ENCODE measurements at regions of chr20 and their contacts with region 1.

Region 1: GRCh38 chr20:52083627-52084232 is 107.8 kb downstream of the ZFP64 start:
- DNase-seq: no peak
- H3K4me3 ChIP-seq: no peak overlapping the region
- H3K27me3 ChIP-seq: no peaks in the 10 kb centered on the region
- CTCF ChIP-seq: peak; percentile 71

Region 2: DNA sequence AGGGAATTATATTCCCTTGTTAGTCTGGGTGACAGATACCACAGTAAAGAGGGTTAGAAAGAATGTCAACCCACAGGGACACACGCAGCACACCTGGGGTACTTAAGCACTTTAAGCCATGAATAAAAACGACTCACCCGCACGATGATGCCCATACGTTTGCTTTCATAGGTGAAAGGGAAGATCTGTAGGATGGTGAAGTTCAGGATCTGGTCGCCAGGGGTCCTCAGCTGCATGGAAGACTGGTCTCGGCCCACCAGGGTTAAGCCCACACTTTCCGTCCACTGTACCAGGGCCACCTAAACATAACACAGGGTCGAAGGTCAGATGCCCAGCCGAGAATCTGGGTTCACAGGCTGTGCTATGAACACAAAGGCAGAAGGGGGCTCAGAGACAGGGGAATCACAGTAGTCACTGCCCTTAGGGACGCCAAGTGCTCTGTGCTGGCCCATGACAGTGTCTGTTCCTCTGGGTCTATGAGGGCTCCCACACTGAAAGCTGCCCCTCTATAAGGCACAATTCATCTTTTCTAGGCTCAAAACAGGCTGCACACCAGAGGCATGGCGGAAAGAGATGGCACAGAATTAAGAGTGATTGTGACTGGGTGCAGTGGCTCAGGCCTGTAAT is 444.4 kb before region 1 on chr20:
- CTCF ChIA-PET with region 1: interaction called, 28 read pairs
- POLR2A ChIA-PET with region 1: no interaction called
- DNase-seq: no peak
- H3K4me3 ChIP-seq: no peak overlapping the region
- H3K27me3 ChIP-seq: no peaks in the 10 kb centered on the region
- CTCF ChIP-seq: peak; percentile 87

Region 3: DNA sequence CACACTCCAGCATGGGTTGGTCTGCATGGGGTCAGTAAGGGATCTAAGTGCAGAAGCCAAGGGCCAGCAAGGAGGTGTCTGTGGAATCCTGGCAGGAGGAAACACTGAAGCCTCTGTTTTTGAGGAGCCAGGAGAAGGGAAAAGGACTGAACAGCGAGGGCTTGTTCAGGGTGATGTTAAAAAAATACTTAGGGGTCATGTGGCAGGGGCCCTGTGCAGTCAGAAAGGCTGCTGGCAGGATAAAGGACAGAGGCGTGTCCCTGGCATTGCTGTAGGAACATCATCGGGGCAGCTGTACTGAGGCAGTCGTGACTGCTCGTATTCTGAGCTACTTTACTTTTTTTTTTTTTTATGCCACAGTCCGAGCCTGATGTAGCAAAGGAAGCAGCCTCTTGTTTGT is 234.9 kb after region 1 on chr20:
- CTCF ChIA-PET with region 1: no interaction called
- POLR2A ChIA-PET with region 1: no interaction called
- DNase-seq: no peak
- H3K4me3 ChIP-seq: no peak overlapping the region
- H3K27me3 ChIP-seq: no peaks in the 10 kb centered on the region
- CTCF ChIP-seq: no peak

Measured in BJ (cell line).